Left lung (tissue), 14 donors: ENCODE measurements at regions of chr6 and their contacts with region 1.

Region 1: DNA sequence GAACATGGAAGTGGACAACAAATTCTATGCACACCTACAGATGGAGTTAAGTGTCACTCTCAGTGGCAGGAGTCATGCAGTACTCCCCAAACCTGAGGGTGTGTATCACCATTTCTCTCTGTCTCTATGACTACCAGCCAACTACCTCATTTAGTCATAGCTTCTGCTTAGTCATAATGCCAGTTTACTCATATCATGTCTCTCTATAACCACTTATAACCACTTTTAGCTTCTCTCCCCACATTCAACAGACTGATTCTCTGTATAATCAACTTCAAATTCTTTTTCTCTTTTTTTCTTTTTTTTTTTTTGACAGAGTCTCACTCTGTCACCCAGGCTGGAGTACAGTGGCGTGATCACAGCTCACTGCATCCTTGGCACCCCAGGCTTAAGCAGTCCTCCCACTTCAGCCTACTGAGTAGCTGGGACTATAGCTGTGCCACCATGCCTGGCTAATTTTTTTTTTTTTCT is 13.8 kb upstream of the GTF3C6 start:
- DNase-seq: no peak
- ATAC-seq: peak; percentile 93
- H3K4me3 ChIP-seq: no peak overlapping the region
- H3K27ac ChIP-seq: peak overlapping the region in 1 of 2 donors; percentile 69
- H3K4me1 ChIP-seq: peaks cover 0 to 8% of the 10 kb centered on the region in 2 donors
- H3K27me3 ChIP-seq: no peaks in the 10 kb centered on the region
- CTCF ChIP-seq: no peak

Region 2: GRCh38 chr6:110537208-110538123 is 407.2 kb before region 1 on chr6:
- intact Hi-C with region 1: loop called in 1 of 2 experiments (anchors 10 kb)
- DNase-seq: no peak
- ATAC-seq: peak; percentile 90
- H3K4me3 ChIP-seq: no peak overlapping the region
- H3K27ac ChIP-seq: peak overlapping the region; percentile 55 to 60
- H3K4me1 ChIP-seq: peaks cover 4 to 12% of the 10 kb centered on the region in 2 donors
- H3K27me3 ChIP-seq: no peaks in the 10 kb centered on the region
- CTCF ChIP-seq: no peak

Region 3: GRCh38 chr6:110682460-110682853 is 262.3 kb before region 1 on chr6:
- intact Hi-C with region 1: loop called in 1 of 2 experiments (anchors 10 kb)
- DNase-seq: peak in 3 of 4 donors; percentile 37 to 81 (median 63)
- ATAC-seq: peak; percentile 99
- H3K4me3 ChIP-seq: no peak overlapping the region
- H3K27ac ChIP-seq: no peak overlapping the region
- H3K4me1 ChIP-seq: peaks cover 6 to 22% of the 10 kb centered on the region in 2 donors
- H3K27me3 ChIP-seq: no peaks in the 10 kb centered on the region
- CTCF ChIP-seq: peak; percentile 63 to 67

Region 4: DNA sequence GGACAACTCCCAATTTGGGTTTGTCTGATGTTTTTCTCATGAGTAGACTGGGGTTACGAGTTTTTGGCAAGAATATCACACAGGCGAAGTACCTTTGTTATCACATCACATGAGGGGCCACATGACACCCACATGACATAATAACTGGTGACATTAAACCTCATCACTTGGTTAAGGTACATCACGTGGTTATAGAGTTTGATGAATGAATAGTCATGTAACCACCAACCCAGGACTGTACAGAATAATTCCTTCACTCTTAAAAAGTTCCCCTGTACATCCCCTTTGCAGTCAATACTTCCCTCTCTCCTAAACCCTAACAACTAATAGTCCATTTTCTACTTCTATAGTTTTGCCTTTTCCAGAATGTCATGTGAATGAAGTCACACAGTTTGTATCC is 454.9 kb after region 1 on chr6:
- intact Hi-C with region 1: no loop called
- DNase-seq: no peak
- ATAC-seq: no peak
- H3K4me3 ChIP-seq: no peak overlapping the region
- H3K27ac ChIP-seq: no peak overlapping the region
- H3K4me1 ChIP-seq: no peaks in the 10 kb centered on the region
- H3K27me3 ChIP-seq: no peaks in the 10 kb centered on the region
- CTCF ChIP-seq: no peak